ENCODE measurements at regions of chr3 and their contacts with region 1.

Region 1: GRCh38 chr3:149657926-149658733 is at the start of gene WWTR1:
- DNase-seq: peak; percentile 99
- H3K4me3 Mint-ChIP-seq: peak within 1 kb of the TSS; percentile 91
- H3K27ac Mint-ChIP-seq: peak within 1 kb of the TSS; percentile 92
- H3K4me1 Mint-ChIP-seq: peaks cover 37% of the 10 kb centered on the region
- H3K27me3 Mint-ChIP-seq: no peaks in the 10 kb centered on the region
- CTCF ChIP-seq: no peak
- total RNA-seq, gene WWTR1: 202 and 269 TPM in 2 replicates

Region 2: DNA sequence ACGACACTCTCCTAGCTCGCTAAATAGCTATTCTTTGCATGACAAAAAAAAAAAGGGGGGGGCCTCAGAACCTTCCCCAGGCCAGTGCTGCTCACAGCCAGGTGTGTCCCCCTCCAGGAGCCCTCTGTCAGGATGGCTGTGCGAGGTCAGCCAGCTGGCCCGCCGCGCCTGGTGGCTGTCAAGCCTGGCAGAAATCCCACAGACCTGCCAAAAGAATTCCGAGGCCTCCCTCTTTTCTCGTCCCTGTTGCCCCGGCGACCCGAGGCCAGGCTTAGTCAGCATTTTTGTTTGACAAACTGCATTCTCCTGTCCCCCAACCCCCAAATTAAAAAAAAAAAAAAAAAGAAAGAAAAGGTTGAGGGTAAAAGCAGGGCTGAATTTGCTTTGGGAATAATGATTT is 121.7 kb before region 1 on chr3:
- CTCF ChIA-PET with region 1: interaction called, 9 read pairs
- intact Hi-C with region 1: loop called (anchors 2 kb)
- DNase-seq: no peak
- H3K4me3 Mint-ChIP-seq: no peak overlapping the region
- H3K27ac Mint-ChIP-seq: peak overlapping the region; percentile 19
- H3K4me1 Mint-ChIP-seq: peaks cover 75% of the 10 kb centered on the region
- H3K27me3 Mint-ChIP-seq: no peaks in the 10 kb centered on the region
- CTCF ChIP-seq: no peak

Region 3: GRCh38 chr3:149603126-149604074 is 54.7 kb before region 1 on chr3:
- CTCF ChIA-PET with region 1: interaction called, 29 read pairs
- intact Hi-C with region 1: loop called (anchors 1 kb)
- DNase-seq: peak; percentile 78
- H3K4me3 Mint-ChIP-seq: peak overlapping the region; percentile 58
- H3K27ac Mint-ChIP-seq: peak overlapping the region; percentile 86
- H3K4me1 Mint-ChIP-seq: peaks cover 78% of the 10 kb centered on the region
- H3K27me3 Mint-ChIP-seq: no peaks in the 10 kb centered on the region
- CTCF ChIP-seq: no peak

Region 4: GRCh38 chr3:149717391-149718056 is 59.4 kb after region 1 on chr3:
- CTCF ChIA-PET with region 1: interaction called, 11 read pairs
- intact Hi-C with region 1: loop called (anchors 1 kb)
- DNase-seq: peak; percentile 74
- H3K4me3 Mint-ChIP-seq: peak overlapping the region; percentile 20
- H3K27ac Mint-ChIP-seq: peak overlapping the region; percentile 58
- H3K4me1 Mint-ChIP-seq: peaks cover 9% of the 10 kb centered on the region
- H3K27me3 Mint-ChIP-seq: no peaks in the 10 kb centered on the region
- CTCF ChIP-seq: peak; percentile 72

Region 5: DNA sequence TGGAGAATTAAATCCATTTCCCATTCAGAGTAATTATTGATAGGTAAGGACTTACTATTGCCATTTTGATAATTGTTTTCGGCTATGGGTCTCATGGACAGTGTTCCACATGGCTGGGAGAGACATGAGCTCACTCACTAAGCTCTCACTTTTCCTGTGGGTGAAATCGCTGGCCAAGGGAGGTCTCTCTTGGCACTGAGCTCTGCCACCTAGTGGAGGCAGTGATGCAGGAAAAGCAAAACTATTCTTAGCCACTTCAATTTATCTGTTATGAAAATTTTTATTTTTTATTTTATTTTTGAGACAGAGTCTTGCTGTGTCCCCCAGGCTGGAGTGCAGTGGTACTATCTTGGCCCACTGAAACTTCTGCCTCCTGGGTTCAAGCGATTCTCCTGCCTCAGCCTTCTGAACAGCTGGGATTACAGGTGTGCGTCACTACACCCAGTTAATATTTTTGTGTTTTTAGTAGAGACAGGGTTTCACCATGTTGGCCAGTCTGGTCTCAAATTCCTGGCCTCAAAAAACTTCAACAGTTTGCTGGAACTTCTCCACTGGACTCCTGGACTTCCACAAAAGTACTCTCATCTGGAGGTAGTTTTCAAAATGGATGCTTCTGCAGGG is 150.2 kb after region 1 on chr3:
- CTCF ChIA-PET with region 1: interaction called, 10 read pairs
- intact Hi-C with region 1: no loop called
- DNase-seq: peak; percentile 83
- H3K4me3 Mint-ChIP-seq: no peak overlapping the region
- H3K27ac Mint-ChIP-seq: no peak overlapping the region
- H3K4me1 Mint-ChIP-seq: peaks cover 16% of the 10 kb centered on the region
- H3K27me3 Mint-ChIP-seq: no peaks in the 10 kb centered on the region
- CTCF ChIP-seq: peak; percentile 93